ENCODE measurements at regions of chr4 and their contacts with region 1.

Region 1: DNA sequence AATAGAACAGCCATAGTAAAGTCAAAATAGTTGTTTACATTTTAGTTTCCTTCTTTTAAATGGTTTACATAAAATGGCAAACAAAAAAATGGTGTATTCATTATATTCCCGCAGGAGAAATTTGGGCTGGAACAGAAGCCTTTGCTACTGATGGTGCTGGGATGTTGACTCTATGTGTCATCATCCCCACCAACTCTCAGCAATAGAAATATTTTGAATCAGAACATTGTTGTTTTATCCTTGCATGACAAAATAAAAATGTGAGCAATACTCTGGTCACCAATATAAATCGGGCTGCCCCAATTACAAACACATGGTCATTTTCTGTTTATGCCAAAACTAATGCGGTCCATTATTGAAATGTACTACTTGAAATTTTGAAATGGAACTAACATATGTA is 1131.6 kb upstream of the PCDH7 start:
- DNase-seq: no peak
- H3K4me3 ChIP-seq: no peak overlapping the region
- H3K27ac ChIP-seq: no peak overlapping the region
- H3K4me1 ChIP-seq: no peaks in the 10 kb centered on the region
- H3K27me3 ChIP-seq: no peaks in the 10 kb centered on the region
- CTCF ChIP-seq: no peak

Region 2: DNA sequence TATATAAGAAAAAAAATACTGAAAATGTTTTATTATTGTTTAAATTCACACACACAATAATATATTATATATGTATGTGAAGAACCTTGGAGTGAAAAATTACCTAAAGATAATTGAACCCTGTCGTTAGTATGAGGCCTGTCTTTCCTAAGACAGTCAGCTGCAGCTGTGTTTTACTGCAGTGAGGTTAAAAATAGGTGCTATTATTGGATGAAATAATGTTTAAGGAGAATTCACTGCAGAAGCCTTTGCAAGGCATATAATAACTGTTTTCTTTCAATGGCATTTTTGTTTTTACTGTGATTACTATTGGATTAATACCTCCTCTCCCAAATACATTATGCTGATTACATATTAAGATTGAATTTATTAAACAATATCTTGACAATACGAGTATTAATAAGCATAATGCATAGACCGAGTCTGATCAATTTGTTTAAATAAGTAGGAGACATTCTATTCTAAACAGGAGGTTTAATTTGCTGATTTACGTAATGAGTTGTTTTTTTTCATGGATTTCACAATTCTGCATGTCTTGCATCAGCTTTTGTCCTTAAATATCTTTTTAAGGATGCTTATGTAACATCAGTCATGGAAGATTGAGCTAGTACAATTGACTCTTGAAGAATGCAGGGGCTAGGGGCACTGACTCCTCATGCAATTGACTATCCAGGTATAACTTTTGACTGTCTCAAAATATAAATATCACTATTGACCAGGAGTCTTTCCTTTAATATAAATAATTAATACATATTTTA is 49.5 kb before region 1 on chr4:
- CTCF ChIA-PET with region 1: no interaction called
- POLR2A ChIA-PET with region 1: no interaction called
- intact Hi-C with region 1: loop called (anchors 1 kb)
- DNase-seq: no peak
- H3K4me3 ChIP-seq: no peak overlapping the region
- H3K27ac ChIP-seq: no peak overlapping the region
- H3K4me1 ChIP-seq: no peaks in the 10 kb centered on the region
- H3K27me3 ChIP-seq: no peaks in the 10 kb centered on the region
- CTCF ChIP-seq: no peak

Region 3: DNA sequence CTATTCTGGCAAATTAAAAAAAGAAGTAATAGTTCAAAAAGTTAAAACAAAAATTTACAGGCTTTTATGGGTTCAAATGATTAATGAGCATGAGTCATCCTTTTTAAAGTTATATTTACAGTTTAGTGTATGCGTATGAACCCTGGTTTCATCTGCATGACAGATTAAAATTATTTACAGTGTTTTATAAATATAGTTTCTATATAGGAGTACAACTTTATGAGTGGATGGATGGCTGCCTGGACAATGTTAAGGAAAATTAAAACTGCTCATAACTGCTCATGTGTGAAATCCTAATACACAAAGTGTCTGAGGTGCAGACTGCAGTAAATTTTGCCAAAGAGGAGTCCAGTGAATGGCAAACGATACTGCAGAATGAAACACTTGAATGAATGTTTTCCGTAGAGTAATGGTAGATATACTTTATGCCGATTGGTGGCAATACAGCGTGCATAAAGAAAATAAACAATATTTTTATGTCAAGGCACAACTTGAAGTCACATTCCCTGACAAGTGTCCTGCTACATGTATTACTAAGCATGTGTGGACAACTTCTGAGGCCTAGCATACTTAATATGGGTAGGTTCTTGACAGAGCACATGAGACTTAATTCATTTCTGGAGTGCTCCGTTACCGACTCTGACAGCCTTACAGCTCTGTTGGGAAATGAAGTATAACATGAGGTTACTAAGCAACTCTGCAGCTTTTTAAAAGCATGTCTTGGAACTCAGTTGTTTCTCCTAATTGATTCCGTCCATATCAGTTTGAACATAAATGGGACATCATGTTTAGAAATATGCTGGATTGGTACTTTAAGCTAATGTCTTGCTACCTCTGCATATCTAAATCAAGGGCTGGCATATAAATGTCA is 146.0 kb after region 1 on chr4:
- CTCF ChIA-PET with region 1: no interaction called
- POLR2A ChIA-PET with region 1: no interaction called
- intact Hi-C with region 1: no loop called
- DNase-seq: no peak
- H3K4me3 ChIP-seq: no peak overlapping the region
- H3K27ac ChIP-seq: no peak overlapping the region
- H3K4me1 ChIP-seq: no peaks in the 10 kb centered on the region
- H3K27me3 ChIP-seq: no peaks in the 10 kb centered on the region
- CTCF ChIP-seq: no peak

Measured in PC-9 (cell line).